ENCODE measurements at regions of chr7 and their contacts with region 1.

Region 1: DNA sequence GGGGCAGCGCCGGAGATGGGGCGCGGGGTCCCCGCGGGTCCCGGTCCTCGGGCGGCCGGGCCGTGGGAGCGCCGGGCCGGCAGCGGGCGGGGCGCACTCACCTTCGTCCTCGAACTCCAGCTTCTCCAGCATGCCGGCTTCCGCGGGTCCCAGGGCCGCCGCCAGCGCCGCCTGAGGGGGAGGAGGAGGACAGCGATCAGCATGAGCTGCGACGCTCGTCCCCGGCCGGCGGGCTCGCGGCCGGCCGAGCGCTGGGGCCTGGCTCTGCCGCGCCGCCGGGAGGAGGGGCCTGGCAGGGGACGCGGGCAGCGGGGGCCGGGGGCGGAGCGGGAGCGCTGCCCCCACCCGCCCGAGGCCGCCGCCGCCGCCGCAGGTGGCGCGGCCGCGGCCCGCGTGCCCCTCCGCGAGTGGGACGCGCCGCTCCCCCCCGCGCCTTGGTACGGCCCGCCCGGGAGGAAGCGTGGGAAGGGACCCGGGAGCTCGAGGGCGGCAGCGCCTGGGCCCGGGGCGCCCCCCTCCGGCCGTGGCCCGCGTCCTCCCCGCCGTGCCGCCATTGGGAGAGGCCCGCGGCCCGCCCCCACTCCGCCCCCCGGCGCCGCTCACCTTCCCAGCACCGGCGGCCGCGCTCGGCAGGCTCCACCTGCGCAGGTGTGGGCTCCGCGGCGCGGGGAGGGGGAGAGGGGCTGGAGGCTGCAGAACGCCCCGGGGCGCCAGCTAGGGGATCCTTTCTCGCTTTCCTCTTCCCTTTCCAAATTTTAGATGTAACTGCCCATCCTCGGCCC is 112.5 kb upstream of the RHEB start:
- DNase-seq: peak; percentile 93
- ATAC-seq: peak; percentile 76
- H3K4me3 Mint-ChIP-seq: peak overlapping the region; percentile 96
- H3K27ac Mint-ChIP-seq: peak overlapping the region; percentile 98
- H3K4me1 Mint-ChIP-seq: peaks cover 15% of the 10 kb centered on the region
- H3K27me3 Mint-ChIP-seq: no peaks in the 10 kb centered on the region
- CTCF ChIP-seq: no peak

Region 2: GRCh38 chr7:151057989-151058780 is 574.0 kb before region 1 on chr7:
- CTCF ChIA-PET with region 1: no interaction called
- POLR2A ChIA-PET with region 1: no interaction called
- intact Hi-C with region 1: loop called (anchors 2 kb)
- DNase-seq: peak; percentile 91
- ATAC-seq: peak; percentile 93
- H3K4me3 Mint-ChIP-seq: peak overlapping the region; percentile 92
- H3K27ac Mint-ChIP-seq: peak overlapping the region; percentile 89
- H3K4me1 Mint-ChIP-seq: peaks cover 36% of the 10 kb centered on the region
- H3K27me3 Mint-ChIP-seq: no peaks in the 10 kb centered on the region
- CTCF ChIP-seq: no peak

Region 3: GRCh38 chr7:151368136-151368571 is 264.0 kb before region 1 on chr7:
- CTCF ChIA-PET with region 1: interaction called, 3 read pairs
- POLR2A ChIA-PET with region 1: no interaction called
- intact Hi-C with region 1: loop called (anchors 1 kb)
- DNase-seq: peak; percentile 64
- ATAC-seq: peak; percentile 100
- H3K4me3 Mint-ChIP-seq: no peak overlapping the region
- H3K27ac Mint-ChIP-seq: no peak overlapping the region
- H3K4me1 Mint-ChIP-seq: peaks cover 6% of the 10 kb centered on the region
- H3K27me3 Mint-ChIP-seq: no peaks in the 10 kb centered on the region
- CTCF ChIP-seq: peak; percentile 37

Region 4: GRCh38 chr7:151519765-151520418 is 112.3 kb before region 1 on chr7 and contains the start of gene RHEB:
- CTCF ChIA-PET with region 1: interaction called, 7 read pairs
- POLR2A ChIA-PET with region 1: interaction called, 34 read pairs
- intact Hi-C with region 1: loop called (anchors 1 kb)
- DNase-seq: peak; percentile 94
- ATAC-seq: peak; percentile 86
- H3K4me3 Mint-ChIP-seq: peak within 1 kb of the TSS; percentile 94
- H3K27ac Mint-ChIP-seq: peak within 1 kb of the TSS; percentile 98
- H3K4me1 Mint-ChIP-seq: peaks cover 39% of the 10 kb centered on the region
- H3K27me3 Mint-ChIP-seq: no peaks in the 10 kb centered on the region
- CTCF ChIP-seq: no peak
- total RNA-seq, gene RHEB: 30.5 and 32.8 TPM in 2 replicates

Region 5: DNA sequence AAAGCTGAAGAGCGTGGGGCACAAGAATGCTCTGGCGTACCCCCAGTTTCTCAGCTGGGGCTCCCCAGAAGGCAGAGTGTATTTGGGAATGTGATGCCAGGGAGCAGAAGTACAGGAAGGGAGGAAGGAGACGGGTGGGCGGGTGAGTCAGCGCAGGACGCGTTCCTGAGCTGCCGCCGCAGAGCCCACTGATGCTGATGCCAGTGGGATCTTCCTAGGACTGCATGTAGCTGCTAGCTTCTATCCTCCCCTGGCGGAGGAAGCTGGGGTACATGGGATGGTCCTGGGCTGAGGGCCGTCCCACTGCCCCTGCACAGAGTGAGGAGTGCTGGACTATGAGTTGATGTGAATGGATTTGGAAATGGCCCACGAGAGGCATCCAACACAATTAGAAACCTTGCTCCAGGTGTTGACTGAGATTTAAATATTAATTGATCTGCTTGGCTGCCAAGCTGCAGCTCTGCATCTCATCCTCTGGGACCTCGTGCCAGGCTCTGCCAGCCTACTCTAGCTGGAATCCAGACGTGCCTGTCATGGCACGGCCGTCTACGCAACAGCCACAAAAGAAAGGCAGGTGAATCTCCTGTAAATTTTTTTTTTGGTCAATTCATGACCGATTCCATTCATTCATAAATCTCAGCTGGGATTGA is 46.3 kb before region 1 on chr7:
- CTCF ChIA-PET with region 1: no interaction called
- POLR2A ChIA-PET with region 1: no interaction called
- intact Hi-C with region 1: no loop called
- DNase-seq: no peak
- ATAC-seq: no peak
- H3K4me3 Mint-ChIP-seq: no peak overlapping the region
- H3K27ac Mint-ChIP-seq: no peak overlapping the region
- H3K4me1 Mint-ChIP-seq: peaks cover 9% of the 10 kb centered on the region
- H3K27me3 Mint-ChIP-seq: no peaks in the 10 kb centered on the region
- CTCF ChIP-seq: no peak

Region 6: DNA sequence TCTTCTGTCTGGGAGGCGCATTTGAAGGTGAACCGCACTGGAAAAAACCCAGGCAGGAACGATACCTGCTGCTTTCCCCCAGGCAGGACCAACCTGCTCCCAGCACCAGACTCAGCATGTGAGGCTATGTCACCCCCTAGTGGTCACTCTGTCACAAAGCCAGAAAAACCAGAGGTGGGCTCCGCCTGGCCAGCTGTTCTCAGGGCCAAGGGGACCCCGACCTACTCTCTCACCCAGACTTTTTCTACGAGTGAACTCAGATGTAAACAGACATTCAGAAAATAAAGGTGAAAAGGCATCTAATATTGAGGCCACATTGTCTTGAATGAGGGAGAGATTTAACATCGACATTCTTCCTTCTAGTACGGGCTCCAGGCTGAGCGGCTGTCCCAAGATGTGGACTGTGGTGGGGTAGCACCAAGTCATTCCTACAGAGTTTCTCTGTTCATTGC is 127.5 kb after region 1 on chr7:
- CTCF ChIA-PET with region 1: interaction called, 21 read pairs
- POLR2A ChIA-PET with region 1: no interaction called
- intact Hi-C with region 1: no loop called
- DNase-seq: no peak
- ATAC-seq: peak; percentile 70
- H3K4me3 Mint-ChIP-seq: no peak overlapping the region
- H3K27ac Mint-ChIP-seq: no peak overlapping the region
- H3K4me1 Mint-ChIP-seq: peaks cover 11% of the 10 kb centered on the region
- H3K27me3 Mint-ChIP-seq: no peaks in the 10 kb centered on the region
- CTCF ChIP-seq: no peak

Region 7: GRCh38 chr7:152025077-152025936 is 393.1 kb after region 1 on chr7 and contains the start of gene GALNT11:
- CTCF ChIA-PET with region 1: no interaction called
- POLR2A ChIA-PET with region 1: no interaction called
- intact Hi-C with region 1: loop called (anchors 2 kb)
- DNase-seq: peak; percentile 90
- ATAC-seq: peak; percentile 92
- H3K4me3 Mint-ChIP-seq: peak within 1 kb of the TSS; percentile 87
- H3K27ac Mint-ChIP-seq: peak within 1 kb of the TSS; percentile 81
- H3K4me1 Mint-ChIP-seq: peaks cover 11% of the 10 kb centered on the region
- H3K27me3 Mint-ChIP-seq: no peaks in the 10 kb centered on the region
- CTCF ChIP-seq: no peak
- total RNA-seq, gene GALNT11: 9.0 and 10.8 TPM in 2 replicates

Region 8: DNA sequence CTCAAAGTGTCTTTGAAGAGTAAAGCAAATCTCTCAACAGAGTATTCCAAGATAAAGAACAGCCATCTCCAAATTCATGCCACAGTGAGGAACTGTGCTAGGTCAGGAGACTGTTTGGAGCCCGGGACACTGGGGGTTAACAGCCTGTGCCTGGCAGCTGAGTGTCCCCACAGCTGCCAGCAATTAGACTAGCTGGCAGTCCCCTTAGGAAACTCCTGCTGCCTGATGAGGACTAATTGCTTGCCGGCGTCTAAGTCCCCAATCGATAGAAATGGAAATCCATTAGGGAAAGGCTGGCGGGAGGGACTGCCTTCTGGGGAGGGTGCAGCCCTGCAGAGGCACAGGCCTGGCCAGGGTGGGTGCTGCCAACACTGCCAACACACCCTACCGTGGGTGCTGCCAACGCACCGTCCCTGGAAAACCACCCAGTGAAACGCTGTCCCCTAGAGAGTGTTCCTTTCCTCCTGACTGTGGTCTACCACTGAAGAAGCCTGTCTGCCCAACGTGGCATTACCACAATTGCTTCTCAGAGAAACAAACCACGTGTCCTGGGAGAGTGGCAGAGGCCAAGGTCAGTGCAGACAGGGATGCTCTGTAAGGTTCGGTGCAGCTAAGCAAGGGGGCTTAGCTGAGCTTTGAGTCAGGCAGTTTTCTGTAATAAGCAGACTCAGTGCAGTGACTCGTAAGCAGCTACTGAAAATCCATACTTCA is 983.0 kb after region 1 on chr7:
- CTCF ChIA-PET with region 1: no interaction called
- POLR2A ChIA-PET with region 1: no interaction called
- intact Hi-C with region 1: no loop called
- DNase-seq: no peak
- ATAC-seq: no peak
- H3K4me3 Mint-ChIP-seq: no peak overlapping the region
- H3K27ac Mint-ChIP-seq: no peak overlapping the region
- H3K4me1 Mint-ChIP-seq: no peaks in the 10 kb centered on the region
- H3K27me3 Mint-ChIP-seq: no peaks in the 10 kb centered on the region
- CTCF ChIP-seq: no peak

Region 9: DNA sequence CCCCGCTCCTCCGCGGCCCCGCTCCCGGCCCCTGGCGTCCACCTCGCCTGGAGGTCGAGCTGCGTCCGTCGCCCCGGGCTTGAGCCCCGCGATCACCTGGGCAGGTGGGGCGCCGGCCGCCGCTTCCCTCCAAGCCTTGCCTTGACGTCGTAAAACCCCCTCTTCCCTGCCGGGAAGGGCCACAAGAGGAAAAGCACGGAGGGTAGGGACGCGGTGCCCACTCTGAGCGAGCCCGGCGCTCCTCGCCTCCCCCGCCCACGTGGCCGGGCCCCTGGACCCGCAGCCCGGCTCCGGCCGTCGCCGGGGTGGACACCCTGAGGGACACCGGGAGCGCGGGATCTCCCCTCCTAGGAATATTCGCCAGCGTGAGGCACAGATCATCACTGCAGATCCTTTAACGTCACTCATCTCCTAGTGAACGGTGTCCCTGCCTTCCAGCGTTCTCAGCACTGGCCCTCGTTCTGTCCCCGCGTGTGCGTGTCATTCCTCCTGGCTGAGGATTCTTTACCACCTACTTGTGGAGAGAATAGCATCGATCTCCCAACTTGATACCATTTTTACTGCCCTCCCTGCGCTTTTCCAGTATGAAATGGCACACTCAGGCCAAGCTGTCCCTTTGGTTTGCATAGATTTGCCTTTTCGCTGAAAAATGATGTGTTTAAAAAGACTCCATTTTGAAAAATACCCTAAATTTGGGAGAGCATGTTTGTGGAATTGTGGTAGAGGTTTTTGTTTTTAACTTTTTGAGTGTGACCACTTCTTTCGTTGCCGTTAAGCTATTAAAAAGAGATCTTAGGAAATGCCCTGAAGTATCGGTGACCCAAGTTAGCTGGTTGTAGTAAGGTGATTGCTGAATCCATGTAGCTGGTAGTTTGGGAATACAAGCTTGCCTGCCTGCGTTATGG is 1128.0 kb after region 1 on chr7:
- CTCF ChIA-PET with region 1: no interaction called
- POLR2A ChIA-PET with region 1: no interaction called
- intact Hi-C with region 1: loop called (anchors 5 kb)
- DNase-seq: no peak
- ATAC-seq: peak; percentile 17
- H3K4me3 Mint-ChIP-seq: peak overlapping the region; percentile 91
- H3K27ac Mint-ChIP-seq: peak overlapping the region; percentile 77
- H3K4me1 Mint-ChIP-seq: peaks cover 21% of the 10 kb centered on the region
- H3K27me3 Mint-ChIP-seq: no peaks in the 10 kb centered on the region
- CTCF ChIP-seq: no peak

Measured in activated B cell treated with CpG ODN at 0.5 μM for 24 hours (primary cell).